ENCODE measurements at regions of chr12 and their contacts with region 1.

Region 1: DNA sequence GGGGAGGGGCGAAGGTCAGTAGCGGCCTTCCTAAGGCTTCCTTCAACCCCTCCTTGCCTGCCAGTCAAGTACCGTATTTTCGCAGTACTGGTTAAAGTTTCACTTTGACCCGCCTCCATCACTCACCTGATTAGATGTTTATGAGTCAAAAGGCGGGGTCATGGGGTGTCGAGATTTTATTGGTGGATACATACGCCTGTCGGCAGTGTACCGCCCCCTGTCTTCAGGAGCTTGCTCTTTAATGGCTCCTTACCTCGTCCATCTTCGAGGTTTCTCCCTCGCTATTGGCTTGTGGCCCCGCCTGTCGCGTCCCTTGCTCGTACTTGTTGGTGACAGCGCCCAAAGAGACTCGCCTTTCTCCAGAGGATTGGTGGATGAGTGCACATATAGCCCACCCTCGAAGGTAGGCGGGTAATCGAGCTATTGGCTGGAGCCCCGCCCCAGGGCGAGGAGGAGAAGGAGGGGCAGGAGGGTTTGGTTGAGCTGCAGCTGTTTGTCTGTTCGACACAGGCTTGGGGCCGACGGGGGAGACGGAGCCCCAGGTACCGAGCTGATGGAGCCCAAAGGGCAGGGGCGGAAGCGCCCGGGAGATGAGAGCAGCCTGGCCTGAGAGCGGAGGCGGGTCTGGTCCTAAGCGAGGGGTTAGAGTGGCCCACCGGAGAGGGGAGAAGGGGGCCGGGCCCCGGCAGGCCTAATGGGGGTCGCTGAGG is at the start of gene RAB5B:
- DNase-seq: peak; percentile 98 to 100
- H3K4me3 ChIP-seq: peak within 1 kb of the TSS; percentile 92
- H3K4me3 Mint-ChIP-seq: no peak within 1 kb of the TSS
- H3K27ac Mint-ChIP-seq: no peak within 1 kb of the TSS
- H3K4me1 ChIP-seq: peaks cover 31% of the 10 kb centered on the region
- H3K4me1 Mint-ChIP-seq: peaks cover 16% of the 10 kb centered on the region
- H3K27me3 ChIP-seq: no peaks in the 10 kb centered on the region
- H3K27me3 Mint-ChIP-seq: no peaks in the 10 kb centered on the region
- CTCF ChIP-seq: peak in 1 of 2 experiments; percentile 21
- total RNA-seq, gene RAB5B: 98.4 and 107 TPM in 2 replicates

Region 2: GRCh38 chr12:55817346-55818139 is 156.2 kb before region 1 on chr12 and contains the starts of genes ORMDL2 and SARNP:
- CTCF ChIA-PET with region 1: interaction called, 6 read pairs
- POLR2A ChIA-PET with region 1: interaction called, 15 read pairs
- intact Hi-C with region 1: no loop called
- DNase-seq: peak; percentile 97 to 99
- H3K4me3 ChIP-seq: peak within 1 kb of the TSS; percentile 83
- H3K4me3 Mint-ChIP-seq: no peak within 1 kb of the TSS
- H3K27ac Mint-ChIP-seq: no peak within 1 kb of the TSS
- H3K4me1 ChIP-seq: peaks cover 7% of the 10 kb centered on the region; the same call in 1 of the 2 replicates
- H3K4me1 Mint-ChIP-seq: peaks cover 30% of the 10 kb centered on the region
- H3K27me3 ChIP-seq: no peaks in the 10 kb centered on the region
- H3K27me3 Mint-ChIP-seq: no peaks in the 10 kb centered on the region
- CTCF ChIP-seq: no peak
- total RNA-seq, gene ORMDL2: 44.0 and 48.3 TPM in 2 replicates
- total RNA-seq, gene SARNP: 70.9 and 77.6 TPM in 2 replicates

Region 3: GRCh38 chr12:55885113-55885512 is 88.6 kb before region 1 on chr12:
- CTCF ChIA-PET with region 1: no interaction called
- POLR2A ChIA-PET with region 1: no interaction called
- intact Hi-C with region 1: no loop called
- DNase-seq: no peak
- H3K4me3 ChIP-seq: no peak overlapping the region
- H3K4me3 Mint-ChIP-seq: no peak overlapping the region
- H3K27ac Mint-ChIP-seq: no peak overlapping the region
- H3K4me1 ChIP-seq: no peaks in the 10 kb centered on the region
- H3K4me1 Mint-ChIP-seq: peaks cover 7% of the 10 kb centered on the region
- H3K27me3 ChIP-seq: no peaks in the 10 kb centered on the region
- H3K27me3 Mint-ChIP-seq: no peaks in the 10 kb centered on the region
- CTCF ChIP-seq: no peak

Region 4: DNA sequence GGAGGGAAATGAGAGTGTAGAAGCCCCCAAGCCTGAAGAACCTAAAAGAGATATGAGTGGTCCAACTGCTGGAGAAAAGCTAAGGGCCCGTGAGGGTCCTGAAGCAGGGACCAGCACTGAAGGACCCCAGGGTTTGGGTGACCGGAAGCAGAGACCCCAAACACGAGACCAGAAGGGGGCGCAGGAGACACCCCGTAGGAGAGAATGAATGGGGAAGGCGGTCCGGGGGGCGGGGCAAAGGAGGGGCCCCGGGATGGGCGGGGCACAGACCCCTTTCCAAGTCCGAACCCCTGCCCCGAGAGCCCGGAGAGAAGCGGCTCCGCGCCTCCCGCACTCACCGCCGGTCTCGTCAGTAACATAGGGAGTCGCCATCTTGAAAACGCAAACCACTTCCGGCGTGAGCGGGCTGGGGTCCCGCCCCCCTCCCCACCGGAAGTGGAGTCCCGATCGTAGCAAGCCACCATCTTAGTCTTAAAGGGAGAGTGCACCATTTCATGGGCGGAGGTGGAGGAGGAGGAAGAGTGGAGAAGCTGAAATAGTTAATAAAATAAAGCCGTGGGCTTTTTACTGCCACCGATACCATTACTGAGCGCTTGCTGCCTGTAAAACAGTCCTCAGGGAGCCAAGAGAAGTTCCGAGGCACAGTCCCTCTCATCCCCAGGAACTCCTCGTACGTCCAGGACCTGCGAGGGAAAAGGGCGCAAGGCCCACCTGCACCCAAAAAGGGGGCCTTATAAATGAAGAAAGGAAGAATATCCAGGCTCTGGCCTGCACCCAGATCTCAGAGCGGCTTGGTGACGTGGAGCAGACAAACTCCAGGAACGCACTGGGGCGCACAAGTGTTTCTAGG is 46.8 kb before region 1 on chr12:
- CTCF ChIA-PET with region 1: interaction called, 7 read pairs
- POLR2A ChIA-PET with region 1: interaction called, 21 read pairs
- intact Hi-C with region 1: loop called (anchors 2 kb)
- DNase-seq: peak; percentile 89 to 95
- H3K4me3 ChIP-seq: peak overlapping the region; percentile 74
- H3K4me3 Mint-ChIP-seq: peak overlapping the region; percentile 98
- H3K27ac Mint-ChIP-seq: peak overlapping the region; percentile 97
- H3K4me1 ChIP-seq: peaks cover 19% of the 10 kb centered on the region
- H3K4me1 Mint-ChIP-seq: peaks cover 35% of the 10 kb centered on the region
- H3K27me3 ChIP-seq: no peaks in the 10 kb centered on the region
- H3K27me3 Mint-ChIP-seq: no peaks in the 10 kb centered on the region
- CTCF ChIP-seq: peak; percentile 79 to 86

Region 5: GRCh38 chr12:55955800-55956508 is 17.8 kb before region 1 on chr12:
- CTCF ChIA-PET with region 1: interaction called, 8 read pairs
- POLR2A ChIA-PET with region 1: interaction called, 6 read pairs
- intact Hi-C with region 1: loop called (anchors 1 kb)
- DNase-seq: peak; percentile 90 to 91
- H3K4me3 ChIP-seq: no peak overlapping the region
- H3K4me3 Mint-ChIP-seq: peak overlapping the region; percentile 60
- H3K27ac Mint-ChIP-seq: peak overlapping the region; percentile 93
- H3K4me1 ChIP-seq: peaks cover 44% of the 10 kb centered on the region
- H3K4me1 Mint-ChIP-seq: peaks cover 41% of the 10 kb centered on the region
- H3K27me3 ChIP-seq: no peaks in the 10 kb centered on the region
- H3K27me3 Mint-ChIP-seq: no peaks in the 10 kb centered on the region
- CTCF ChIP-seq: peak; percentile 69 to 74

Region 6: GRCh38 chr12:56007564-56008559 is 34.1 kb after region 1 on chr12:
- CTCF ChIA-PET with region 1: no interaction called
- POLR2A ChIA-PET with region 1: interaction called, 13 read pairs
- intact Hi-C with region 1: no loop called
- DNase-seq: peak; percentile 75 to 81
- H3K4me3 ChIP-seq: peak overlapping the region; percentile 52
- H3K4me3 Mint-ChIP-seq: peak overlapping the region; percentile 93
- H3K27ac Mint-ChIP-seq: peak overlapping the region; percentile 82
- H3K4me1 ChIP-seq: peaks cover 54% of the 10 kb centered on the region
- H3K4me1 Mint-ChIP-seq: peaks cover 59% of the 10 kb centered on the region
- H3K27me3 ChIP-seq: no peaks in the 10 kb centered on the region
- H3K27me3 Mint-ChIP-seq: no peaks in the 10 kb centered on the region
- CTCF ChIP-seq: no peak

Region 7: GRCh38 chr12:56104109-56104814 is 130.5 kb after region 1 on chr12 and contains the start of gene PA2G4:
- CTCF ChIA-PET with region 1: interaction called, 5 read pairs
- POLR2A ChIA-PET with region 1: interaction called, 9 read pairs
- intact Hi-C with region 1: loop called (anchors 1 kb)
- DNase-seq: peak; percentile 99
- H3K4me3 ChIP-seq: peak within 1 kb of the TSS; percentile 68
- H3K4me3 Mint-ChIP-seq: peak within 1 kb of the TSS; percentile 98
- H3K27ac Mint-ChIP-seq: peak within 1 kb of the TSS; percentile 99
- H3K4me1 ChIP-seq: peaks cover 22% of the 10 kb centered on the region
- H3K4me1 Mint-ChIP-seq: peaks cover 9% of the 10 kb centered on the region
- H3K27me3 ChIP-seq: no peaks in the 10 kb centered on the region; the same call in 1 of the 2 replicates
- H3K27me3 Mint-ChIP-seq: no peaks in the 10 kb centered on the region
- CTCF ChIP-seq: no peak
- total RNA-seq, gene PA2G4: 178 and 190 TPM in 2 replicates

Region 8: DNA sequence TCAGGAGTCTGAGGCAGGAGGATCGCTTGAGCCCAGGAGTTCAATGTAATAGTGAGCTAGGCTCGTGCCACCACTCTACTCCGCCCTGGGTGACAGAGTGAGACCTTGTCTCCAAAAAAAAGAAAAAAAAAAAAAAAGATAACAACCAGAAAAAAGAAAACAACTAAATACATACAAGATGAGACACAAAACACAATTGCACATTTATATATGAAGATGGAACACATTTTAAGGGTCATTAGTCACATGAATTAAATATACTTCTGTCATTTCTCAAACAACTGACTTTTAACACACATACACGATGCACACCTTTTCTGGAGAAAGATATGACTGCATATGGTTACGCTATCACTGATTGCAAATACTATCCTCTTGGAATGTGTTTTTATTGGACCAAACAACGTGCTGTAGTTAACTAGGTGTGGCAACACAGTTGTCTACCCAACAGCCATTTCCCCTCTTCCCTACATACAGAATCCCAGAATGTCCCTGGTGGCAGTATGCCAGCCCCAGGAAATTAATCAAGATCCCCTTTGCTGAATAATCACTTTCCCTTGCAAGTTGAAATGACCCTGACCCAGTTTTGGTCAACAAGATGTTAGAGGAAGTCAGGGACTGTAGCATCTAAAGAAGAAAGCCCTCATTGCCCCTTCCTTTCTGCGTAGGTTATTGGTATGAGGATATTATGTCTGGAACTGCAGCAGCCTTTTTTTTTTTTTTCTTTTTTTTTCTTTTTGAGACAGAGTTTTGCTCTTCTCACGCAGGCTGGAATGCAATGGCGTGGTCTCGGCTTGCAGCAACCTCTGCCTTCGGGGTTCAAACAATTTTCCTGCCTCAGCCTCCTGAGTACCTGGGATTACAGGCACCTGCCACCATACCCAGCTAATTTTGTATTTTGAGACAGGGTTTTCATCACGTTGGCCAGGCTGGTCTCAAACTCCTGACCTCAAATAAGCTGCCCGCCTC is 173.0 kb after region 1 on chr12:
- CTCF ChIA-PET with region 1: no interaction called
- POLR2A ChIA-PET with region 1: no interaction called
- intact Hi-C with region 1: no loop called
- DNase-seq: no peak
- H3K4me3 ChIP-seq: no peak overlapping the region
- H3K4me3 Mint-ChIP-seq: no peak overlapping the region
- H3K27ac Mint-ChIP-seq: no peak overlapping the region
- H3K4me1 ChIP-seq: peaks cover 3% of the 10 kb centered on the region; the same call in 1 of the 2 replicates
- H3K4me1 Mint-ChIP-seq: peaks cover 6% of the 10 kb centered on the region
- H3K27me3 ChIP-seq: no peaks in the 10 kb centered on the region
- H3K27me3 Mint-ChIP-seq: no peaks in the 10 kb centered on the region
- CTCF ChIP-seq: no peak

Measured in Caco-2 (cell line).